Naive thymus-derived CD4-positive, alpha-beta T cell (primary cell): ENCODE measurements at regions of chr6 and their contacts with region 1.

Region 1: DNA sequence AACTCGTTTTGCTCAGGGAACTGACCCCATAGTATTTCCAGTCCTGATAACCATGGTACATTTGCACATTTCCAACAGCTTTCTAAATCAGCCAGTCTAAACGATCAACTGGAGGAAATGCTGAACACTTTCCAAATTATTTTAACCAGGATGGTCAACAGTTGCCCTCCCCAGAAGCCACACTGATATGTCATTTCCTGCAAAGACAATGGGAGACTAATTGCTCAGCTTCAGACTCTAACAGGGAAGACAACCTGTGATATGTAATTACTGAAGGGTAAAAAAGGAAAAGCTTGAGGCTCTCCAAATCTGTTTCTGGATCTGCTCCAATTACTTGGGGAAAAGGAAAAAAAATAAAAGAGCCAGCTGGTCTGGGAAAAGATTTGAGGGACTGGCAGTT is 88.8 kb downstream of the FYN start:
- DNase-seq: no peak
- ATAC-seq: no peak
- H3K4me3 ChIP-seq: no peak overlapping the region
- H3K4me3 Mint-ChIP-seq: peak overlapping the region in 2 of 10 donors; percentile 24 to 41
- H3K27ac ChIP-seq: no peak overlapping the region
- H3K27ac Mint-ChIP-seq: peak overlapping the region in 8 of 9 donors; percentile 59 to 94 (median 83)
- H3K4me1 ChIP-seq: peaks cover 47 to 64% of the 10 kb centered on the region in 2 donors
- H3K4me1 Mint-ChIP-seq: peaks cover 42 to 69% (median 62%) of the 10 kb centered on the region in 7 donors
- H3K27me3 ChIP-seq: no peaks in the 10 kb centered on the region
- H3K27me3 Mint-ChIP-seq: no peaks in the 10 kb centered on the region

Region 2: DNA sequence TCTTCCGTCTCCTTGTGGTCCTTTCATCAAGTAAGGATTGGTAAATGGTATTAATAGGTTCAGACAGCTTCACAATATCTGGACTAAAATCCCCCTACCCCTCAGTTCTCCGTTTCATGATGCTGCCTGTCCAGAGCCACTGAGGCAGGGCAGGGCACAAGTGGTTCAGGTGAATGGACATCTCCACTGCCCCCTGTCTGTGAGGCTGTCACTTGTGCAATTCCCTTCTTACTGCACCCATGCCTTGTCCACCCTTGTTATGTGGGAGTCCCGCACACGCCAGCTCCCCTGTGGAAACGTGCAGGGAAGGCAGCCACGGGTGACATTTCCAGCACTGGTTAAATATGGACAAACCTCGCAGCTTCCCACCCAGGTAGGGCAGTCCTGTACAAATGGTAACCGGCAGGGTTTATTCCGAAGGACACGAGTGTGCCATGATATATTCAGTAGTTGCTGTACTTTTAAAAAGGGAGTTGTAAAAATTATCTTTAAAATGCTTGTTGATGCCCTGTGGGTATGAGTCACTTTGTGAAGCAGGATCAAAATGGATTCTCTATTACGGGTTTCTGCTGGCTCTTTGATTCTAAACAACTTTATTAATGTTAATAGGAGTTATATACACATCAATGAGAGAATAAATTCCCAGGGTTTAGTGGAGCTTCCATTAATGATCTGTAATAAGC is 15.3 kb after region 1 on chr6:
- CTCF ChIA-PET with region 1: interaction called, 4 read pairs
- POLR2A ChIA-PET with region 1: interaction called, 3 read pairs
- intact Hi-C with region 1: loop called in 1 of 2 experiments (anchors 2 kb)
- DNase-seq: no peak
- ATAC-seq: no peak
- H3K4me3 ChIP-seq: no peak overlapping the region
- H3K4me3 Mint-ChIP-seq: peak overlapping the region in 3 of 10 donors; percentile 36 to 49 (median 45)
- H3K27ac ChIP-seq: no peak overlapping the region
- H3K27ac Mint-ChIP-seq: peak overlapping the region; percentile 4 to 84 (median 51)
- H3K4me1 ChIP-seq: peaks cover 50 to 52% of the 10 kb centered on the region in 2 donors
- H3K4me1 Mint-ChIP-seq: peaks cover 37 to 76% (median 64%) of the 10 kb centered on the region in 7 donors
- H3K27me3 ChIP-seq: no peaks in the 10 kb centered on the region
- H3K27me3 Mint-ChIP-seq: no peaks in the 10 kb centered on the region